ENCODE measurements at regions of chr20 and their contacts with region 1.

Region 1: GRCh38 chr20:46545077-46545826 is 5.2 kb downstream of the OCSTAMP start:
- DNase-seq: peak in 1 of 9 donors; percentile 49
- ATAC-seq: peak; percentile 91
- H3K4me3 ChIP-seq: no peak overlapping the region
- H3K4me3 Mint-ChIP-seq: peak overlapping the region in 1 of 10 donors; percentile 77
- H3K27ac ChIP-seq: no peak overlapping the region
- H3K27ac Mint-ChIP-seq: peak overlapping the region in 1 of 9 donors; percentile 88
- H3K4me1 ChIP-seq: peaks cover 0 to 17% of the 10 kb centered on the region in 2 donors
- H3K4me1 Mint-ChIP-seq: peaks cover 0 to 27% (median 0%) of the 10 kb centered on the region in 7 donors
- H3K27me3 ChIP-seq: no peaks in the 10 kb centered on the region
- H3K27me3 Mint-ChIP-seq: peaks cover 0 to 8% (median 0%) of the 10 kb centered on the region in 5 donors

Region 2: GRCh38 chr20:46562373-46563169 is 17.3 kb after region 1 on chr20:
- CTCF ChIA-PET with region 1: no interaction called
- POLR2A ChIA-PET with region 1: no interaction called
- intact Hi-C with region 1: loop called in 1 of 2 experiments (anchors 2 kb)
- DNase-seq: peak in 7 of 9 donors; percentile 16 to 66 (median 30)
- ATAC-seq: peak; percentile 95
- H3K4me3 ChIP-seq: peak overlapping the region; percentile 34
- H3K4me3 Mint-ChIP-seq: no peak overlapping the region
- H3K27ac ChIP-seq: no peak overlapping the region
- H3K27ac Mint-ChIP-seq: no peak overlapping the region
- H3K4me1 ChIP-seq: peaks cover 3 to 7% of the 10 kb centered on the region in 2 donors
- H3K4me1 Mint-ChIP-seq: peaks cover 0 to 28% (median 0%) of the 10 kb centered on the region in 7 donors
- H3K27me3 ChIP-seq: no peaks in the 10 kb centered on the region
- H3K27me3 Mint-ChIP-seq: peaks cover 3 to 15% (median 4%) of the 10 kb centered on the region in 5 donors

Region 3: DNA sequence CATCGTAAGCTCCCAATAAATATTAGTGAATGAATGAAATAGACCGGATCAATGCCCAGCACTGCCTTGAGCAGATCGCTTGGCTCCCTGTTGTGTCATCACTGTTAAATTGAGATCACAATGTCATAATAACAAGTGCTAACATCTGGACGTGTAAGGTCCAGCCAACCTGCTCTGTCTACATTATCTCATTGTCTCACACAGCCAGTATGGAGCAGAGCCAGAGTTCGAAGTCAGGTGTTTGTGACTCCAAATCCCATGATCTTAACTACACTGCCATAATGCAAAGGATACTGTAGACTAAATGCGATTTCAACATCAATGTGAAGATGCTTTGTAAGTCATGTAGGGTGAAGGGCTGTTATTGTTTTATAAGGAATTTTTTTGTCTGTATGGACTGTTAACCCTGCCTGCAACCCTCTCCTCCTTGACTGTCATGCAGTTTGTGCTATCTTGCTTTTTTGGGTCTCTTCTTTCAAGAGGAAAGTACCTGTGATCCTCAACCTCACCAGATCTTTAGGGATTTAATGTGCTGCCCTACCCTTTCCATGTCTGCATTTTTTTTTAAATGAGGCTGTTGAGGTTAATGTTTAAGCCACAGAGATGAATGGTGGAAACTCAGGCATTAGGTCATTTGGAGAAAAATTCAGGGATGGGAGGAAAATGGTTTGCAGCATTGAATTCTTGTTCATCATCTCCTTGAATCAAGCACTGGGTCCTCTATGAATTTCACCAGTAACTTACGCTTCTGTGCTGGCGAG is 54.2 kb after region 1 on chr20:
- CTCF ChIA-PET with region 1: no interaction called
- POLR2A ChIA-PET with region 1: no interaction called
- intact Hi-C with region 1: no loop called
- DNase-seq: no peak
- ATAC-seq: no peak
- H3K4me3 ChIP-seq: no peak overlapping the region
- H3K4me3 Mint-ChIP-seq: no peak overlapping the region
- H3K27ac ChIP-seq: no peak overlapping the region
- H3K27ac Mint-ChIP-seq: peak overlapping the region in 1 of 9 donors; percentile 23
- H3K4me1 ChIP-seq: no peaks in the 10 kb centered on the region
- H3K4me1 Mint-ChIP-seq: peaks cover 0 to 16% (median 0%) of the 10 kb centered on the region in 7 donors
- H3K27me3 ChIP-seq: no peaks in the 10 kb centered on the region
- H3K27me3 Mint-ChIP-seq: peaks cover 9 to 24% (median 16%) of the 10 kb centered on the region in 5 donors

Region 4: DNA sequence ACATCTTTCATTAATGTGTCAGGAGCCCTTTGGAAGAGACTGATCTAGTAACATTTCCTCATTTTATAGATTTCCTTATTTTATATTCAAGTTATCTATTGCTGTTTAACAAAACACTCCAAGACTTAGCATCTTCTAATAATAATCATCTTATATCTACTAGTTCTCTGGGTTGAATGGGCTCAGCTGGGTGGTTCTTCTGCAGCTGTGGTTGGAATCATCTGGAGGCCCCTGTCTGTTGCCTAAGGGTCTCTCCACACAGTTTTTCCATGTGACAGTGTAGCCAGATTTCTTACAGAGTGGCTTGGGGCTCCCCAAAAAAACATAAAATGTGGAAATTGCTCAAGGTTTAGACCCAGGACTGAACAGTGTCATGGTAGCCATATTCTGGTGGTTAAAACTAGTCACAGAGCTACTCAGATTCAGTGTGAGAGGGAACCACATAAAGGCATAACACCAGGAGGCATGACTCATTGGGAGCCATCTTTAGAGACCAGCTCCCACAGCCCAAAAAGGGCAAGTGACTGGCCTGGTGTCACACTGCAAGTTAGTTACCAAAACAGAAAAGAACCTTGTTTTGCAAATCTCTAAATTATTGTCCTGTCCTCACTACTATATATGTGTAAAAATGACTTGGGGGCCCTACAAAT is 175.6 kb after region 1 on chr20:
- CTCF ChIA-PET with region 1: no interaction called
- POLR2A ChIA-PET with region 1: no interaction called
- intact Hi-C with region 1: no loop called
- DNase-seq: no peak
- ATAC-seq: no peak
- H3K4me3 ChIP-seq: no peak overlapping the region
- H3K4me3 Mint-ChIP-seq: no peak overlapping the region
- H3K27ac ChIP-seq: no peak overlapping the region
- H3K27ac Mint-ChIP-seq: no peak overlapping the region
- H3K4me1 ChIP-seq: no peaks in the 10 kb centered on the region
- H3K4me1 Mint-ChIP-seq: no peaks in the 10 kb centered on the region
- H3K27me3 ChIP-seq: no peaks in the 10 kb centered on the region
- H3K27me3 Mint-ChIP-seq: peaks cover 0 to 4% (median 0%) of the 10 kb centered on the region in 5 donors